B cell (primary cell): ENCODE measurements at regions of chr5 and their contacts with region 1.

Region 1: GRCh38 chr5:135191084-135191826 is 157.2 kb upstream of the PITX1 start:
- DNase-seq: peak; percentile 81
- ATAC-seq: peak; percentile 96
- H3K4me3 ChIP-seq: peak overlapping the region in 4 of 5 experiments; percentile 22 to 45 (median 38)
- H3K4me3 Mint-ChIP-seq: peak overlapping the region; percentile 86
- H3K27ac ChIP-seq: no peak overlapping the region
- H3K27ac Mint-ChIP-seq: no peak overlapping the region
- H3K4me1 ChIP-seq: peaks cover 10 to 12% of the 10 kb centered on the region in 2 donors
- H3K4me1 Mint-ChIP-seq: peaks cover 5% of the 10 kb centered on the region
- H3K27me3 ChIP-seq: peaks cover 0 to 39% (median 17%) of the 10 kb centered on the region in 4 experiments
- H3K27me3 Mint-ChIP-seq: peaks cover 68% of the 10 kb centered on the region
- CTCF ChIP-seq: peak; percentile 88

Region 2: DNA sequence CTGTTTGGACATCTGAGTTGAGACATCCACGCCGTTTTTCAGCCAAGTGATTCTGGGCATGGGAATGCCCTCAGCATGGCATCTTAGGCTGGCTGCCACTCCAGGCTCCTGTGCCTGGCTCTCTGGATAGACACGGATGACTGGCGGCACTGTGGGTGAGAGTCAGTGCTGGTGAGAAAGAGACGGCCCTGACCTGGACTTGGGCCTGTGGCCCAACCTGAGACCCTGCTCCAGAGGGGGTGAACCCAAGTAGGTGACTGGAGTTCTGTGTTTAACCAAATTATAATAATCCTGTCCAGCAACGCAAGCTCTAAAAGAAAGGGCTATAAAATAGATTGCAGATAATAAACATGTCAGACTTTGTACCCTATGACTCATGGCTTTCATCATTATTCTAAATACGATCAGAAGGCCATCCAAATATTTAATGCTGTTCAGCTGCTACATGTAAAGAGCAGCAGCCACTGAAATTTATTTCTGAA is 1965.5 kb before region 1 on chr5:
- CTCF ChIA-PET with region 1: no interaction called
- POLR2A ChIA-PET with region 1: no interaction called
- intact Hi-C with region 1: no loop called
- DNase-seq: no peak
- ATAC-seq: no peak
- H3K4me3 ChIP-seq: no peak overlapping the region
- H3K4me3 Mint-ChIP-seq: no peak overlapping the region
- H3K27ac ChIP-seq: no peak overlapping the region
- H3K27ac Mint-ChIP-seq: no peak overlapping the region
- H3K4me1 ChIP-seq: no peaks in the 10 kb centered on the region
- H3K4me1 Mint-ChIP-seq: no peaks in the 10 kb centered on the region
- H3K27me3 ChIP-seq: no peaks in the 10 kb centered on the region
- H3K27me3 Mint-ChIP-seq: peaks cover 14% of the 10 kb centered on the region
- CTCF ChIP-seq: no peak

Region 3: GRCh38 chr5:134917070-134917815 is 274.0 kb before region 1 on chr5:
- CTCF ChIA-PET with region 1: interaction called, 44 read pairs
- POLR2A ChIA-PET with region 1: interaction called, 6 read pairs
- intact Hi-C with region 1: no loop called
- DNase-seq: peak; percentile 27
- ATAC-seq: no peak
- H3K4me3 ChIP-seq: no peak overlapping the region
- H3K4me3 Mint-ChIP-seq: no peak overlapping the region
- H3K27ac ChIP-seq: no peak overlapping the region
- H3K27ac Mint-ChIP-seq: no peak overlapping the region
- H3K4me1 ChIP-seq: no peaks in the 10 kb centered on the region
- H3K4me1 Mint-ChIP-seq: no peaks in the 10 kb centered on the region
- H3K27me3 ChIP-seq: no peaks in the 10 kb centered on the region
- H3K27me3 Mint-ChIP-seq: no peaks in the 10 kb centered on the region
- CTCF ChIP-seq: no peak

Region 4: DNA sequence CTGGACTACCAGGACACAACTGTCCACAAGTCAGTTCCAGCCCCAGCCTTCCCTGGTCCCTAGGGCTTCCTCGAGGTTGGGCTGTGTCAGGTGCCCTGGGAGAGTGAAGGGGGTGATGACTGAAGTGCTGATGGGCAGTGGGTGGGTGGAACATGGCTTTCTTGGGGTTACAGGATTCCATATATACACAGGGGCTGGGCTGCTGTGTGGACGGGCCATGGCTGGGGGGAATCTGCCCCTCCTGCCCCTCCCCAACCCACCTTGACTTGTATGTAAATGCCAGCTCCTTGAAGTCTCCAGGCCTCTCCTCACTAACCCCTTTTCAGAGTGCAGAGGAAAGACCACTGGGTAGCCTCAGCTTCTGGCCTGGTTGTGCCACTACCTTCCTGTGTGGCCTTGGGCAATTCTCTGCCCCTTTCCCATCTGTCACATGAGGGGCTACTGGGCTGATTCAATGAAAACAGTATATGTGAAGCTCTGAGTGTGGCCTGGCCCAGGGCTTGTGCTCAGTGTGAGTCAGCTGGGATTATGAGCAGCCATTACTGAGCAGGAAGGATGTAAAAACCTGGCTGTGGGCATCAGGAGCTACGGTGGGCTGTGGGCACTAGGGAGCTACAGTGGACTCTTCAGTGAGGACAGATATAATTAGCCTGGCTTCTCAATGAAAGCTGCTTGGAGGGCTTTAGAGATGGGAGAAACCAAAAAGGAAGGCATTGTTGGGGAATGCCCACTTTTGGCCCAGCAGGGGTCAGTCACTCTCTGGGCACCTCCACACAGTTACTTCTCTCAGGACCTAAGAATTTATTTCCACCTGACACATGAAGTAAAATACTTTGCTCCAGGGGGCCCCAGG is 180.5 kb before region 1 on chr5:
- CTCF ChIA-PET with region 1: interaction called, 21 read pairs
- POLR2A ChIA-PET with region 1: no interaction called
- intact Hi-C with region 1: no loop called
- DNase-seq: no peak
- ATAC-seq: no peak
- H3K4me3 ChIP-seq: no peak overlapping the region
- H3K4me3 Mint-ChIP-seq: no peak overlapping the region
- H3K27ac ChIP-seq: no peak overlapping the region
- H3K27ac Mint-ChIP-seq: no peak overlapping the region
- H3K4me1 ChIP-seq: no peaks in the 10 kb centered on the region
- H3K4me1 Mint-ChIP-seq: no peaks in the 10 kb centered on the region
- H3K27me3 ChIP-seq: peaks cover 0 to 4% (median 0%) of the 10 kb centered on the region in 4 experiments
- H3K27me3 Mint-ChIP-seq: peaks cover 6% of the 10 kb centered on the region
- CTCF ChIP-seq: no peak

Region 5: DNA sequence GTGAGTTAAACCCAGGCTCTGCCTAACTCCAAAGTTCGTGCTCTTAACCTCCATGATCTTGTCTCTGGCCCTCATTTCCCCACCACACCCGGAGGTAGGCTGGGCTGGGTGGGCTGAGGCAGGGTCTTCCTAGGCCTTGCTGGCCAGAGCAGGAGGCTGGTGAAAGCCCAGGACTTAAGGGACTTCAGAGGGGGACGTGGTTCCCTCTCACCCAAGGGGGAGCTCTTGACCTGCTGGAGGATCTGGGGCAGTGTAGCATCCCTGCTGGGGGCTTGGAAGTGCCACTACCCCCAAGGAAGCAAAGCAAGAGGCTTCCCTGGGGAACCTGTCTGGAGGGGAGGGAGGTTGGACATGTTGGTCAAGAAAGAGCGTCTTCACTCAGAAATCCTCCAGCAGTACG is 171.9 kb before region 1 on chr5:
- CTCF ChIA-PET with region 1: interaction called, 6 read pairs
- POLR2A ChIA-PET with region 1: no interaction called
- intact Hi-C with region 1: loop called (anchors 2 kb)
- DNase-seq: no peak
- ATAC-seq: no peak
- H3K4me3 ChIP-seq: no peak overlapping the region
- H3K4me3 Mint-ChIP-seq: no peak overlapping the region
- H3K27ac ChIP-seq: no peak overlapping the region
- H3K27ac Mint-ChIP-seq: no peak overlapping the region
- H3K4me1 ChIP-seq: no peaks in the 10 kb centered on the region
- H3K4me1 Mint-ChIP-seq: no peaks in the 10 kb centered on the region
- H3K27me3 ChIP-seq: peaks cover 0 to 17% (median 0%) of the 10 kb centered on the region in 4 experiments
- H3K27me3 Mint-ChIP-seq: peaks cover 29% of the 10 kb centered on the region
- CTCF ChIP-seq: no peak

Region 6: GRCh38 chr5:135053278-135053677 is 138.0 kb before region 1 on chr5:
- CTCF ChIA-PET with region 1: no interaction called
- POLR2A ChIA-PET with region 1: no interaction called
- intact Hi-C with region 1: loop called (anchors 1 kb)
- DNase-seq: peak; percentile 92
- ATAC-seq: peak; percentile 89
- H3K4me3 ChIP-seq: peak overlapping the region in 3 of 5 experiments; percentile 9 to 48 (median 27)
- H3K4me3 Mint-ChIP-seq: peak overlapping the region; percentile 85
- H3K27ac ChIP-seq: peak overlapping the region; percentile 29 to 50
- H3K27ac Mint-ChIP-seq: peak overlapping the region; percentile 74
- H3K4me1 ChIP-seq: peaks cover 48 to 55% of the 10 kb centered on the region in 2 donors
- H3K4me1 Mint-ChIP-seq: peaks cover 57% of the 10 kb centered on the region
- H3K27me3 ChIP-seq: peaks cover 0 to 53% (median 29%) of the 10 kb centered on the region in 4 experiments
- H3K27me3 Mint-ChIP-seq: peaks cover 53% of the 10 kb centered on the region
- CTCF ChIP-seq: no peak

Region 7: GRCh38 chr5:135139381-135140137 is 51.7 kb before region 1 on chr5:
- CTCF ChIA-PET with region 1: no interaction called
- POLR2A ChIA-PET with region 1: no interaction called
- intact Hi-C with region 1: no loop called
- DNase-seq: no peak
- ATAC-seq: no peak
- H3K4me3 ChIP-seq: no peak overlapping the region
- H3K4me3 Mint-ChIP-seq: no peak overlapping the region
- H3K27ac ChIP-seq: no peak overlapping the region
- H3K27ac Mint-ChIP-seq: no peak overlapping the region
- H3K4me1 ChIP-seq: peaks cover 8 to 10% of the 10 kb centered on the region in 2 donors
- H3K4me1 Mint-ChIP-seq: peaks cover 13% of the 10 kb centered on the region
- H3K27me3 ChIP-seq: peaks cover 0 to 12% (median 0%) of the 10 kb centered on the region in 4 experiments
- H3K27me3 Mint-ChIP-seq: peaks cover 29% of the 10 kb centered on the region
- CTCF ChIP-seq: no peak

Region 8: GRCh38 chr5:135179308-135179980 is 11.8 kb before region 1 on chr5:
- CTCF ChIA-PET with region 1: interaction called, 15 read pairs
- POLR2A ChIA-PET with region 1: no interaction called
- intact Hi-C with region 1: no loop called
- DNase-seq: no peak
- ATAC-seq: no peak
- H3K4me3 ChIP-seq: no peak overlapping the region
- H3K4me3 Mint-ChIP-seq: no peak overlapping the region
- H3K27ac ChIP-seq: no peak overlapping the region
- H3K27ac Mint-ChIP-seq: no peak overlapping the region
- H3K4me1 ChIP-seq: no peaks in the 10 kb centered on the region
- H3K4me1 Mint-ChIP-seq: no peaks in the 10 kb centered on the region
- H3K27me3 ChIP-seq: peaks cover 0 to 2% (median 0%) of the 10 kb centered on the region in 4 experiments
- H3K27me3 Mint-ChIP-seq: peaks cover 31% of the 10 kb centered on the region
- CTCF ChIP-seq: no peak